ENCODE measurements at regions of chr5 and their contacts with region 1.

Region 1: GRCh38 chr5:43729846-43730478 is 127.0 kb downstream of the NNT start:
- DNase-seq: no peak
- H3K4me3 ChIP-seq: no peak overlapping the region
- H3K27ac ChIP-seq: no peak overlapping the region
- H3K4me1 ChIP-seq: no peaks in the 10 kb centered on the region
- H3K27me3 ChIP-seq: peaks cover 26% of the 10 kb centered on the region; the same call in 1 of the 2 replicates
- CTCF ChIP-seq: peak; percentile 90

Region 2: GRCh38 chr5:43785198-43785597 is 55.2 kb after region 1 on chr5:
- CTCF ChIA-PET with region 1: no interaction called
- POLR2A ChIA-PET with region 1: no interaction called
- intact Hi-C with region 1: loop called (anchors 5 kb)
- DNase-seq: no peak
- H3K4me3 ChIP-seq: no peak overlapping the region
- H3K27ac ChIP-seq: no peak overlapping the region
- H3K4me1 ChIP-seq: no peaks in the 10 kb centered on the region
- H3K27me3 ChIP-seq: peaks cover 37% of the 10 kb centered on the region
- CTCF ChIP-seq: no peak

Region 3: GRCh38 chr5:43889233-43889632 is 159.3 kb after region 1 on chr5:
- CTCF ChIA-PET with region 1: no interaction called
- POLR2A ChIA-PET with region 1: no interaction called
- intact Hi-C with region 1: no loop called
- DNase-seq: no peak
- H3K4me3 ChIP-seq: no peak overlapping the region
- H3K27ac ChIP-seq: no peak overlapping the region
- H3K4me1 ChIP-seq: no peaks in the 10 kb centered on the region
- H3K27me3 ChIP-seq: no peaks in the 10 kb centered on the region
- CTCF ChIP-seq: no peak